ENCODE measurements at regions of chr19 and their contacts with region 1.

Region 1: DNA sequence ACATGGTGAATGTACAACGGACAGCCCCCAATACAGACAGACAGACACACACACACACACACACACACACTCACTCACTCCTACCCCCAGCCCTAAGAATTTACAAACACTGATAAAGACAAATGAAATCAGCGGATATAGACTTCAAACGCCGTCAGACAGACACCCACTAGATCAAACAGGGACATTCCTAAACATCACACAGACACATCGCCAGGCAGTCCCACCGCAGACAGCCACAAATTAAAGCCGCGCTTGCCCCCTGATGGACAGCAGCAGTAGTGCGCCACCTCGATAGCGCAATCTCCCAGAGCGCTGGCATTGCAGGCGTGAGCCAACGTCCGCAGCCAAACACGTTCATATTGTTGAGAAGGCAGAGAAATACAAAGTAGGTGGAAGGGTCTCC is 24.7 kb upstream of the ADGRE1 start:
- DNase-seq: peak; percentile 85
- H3K4me3 Mint-ChIP-seq: peak overlapping the region; percentile 5
- H3K27ac Mint-ChIP-seq: no peak overlapping the region
- H3K4me1 Mint-ChIP-seq: peaks cover 8% of the 10 kb centered on the region
- H3K27me3 Mint-ChIP-seq: peaks cover 11% of the 10 kb centered on the region
- CTCF ChIP-seq: peak; percentile 75

Region 2: DNA sequence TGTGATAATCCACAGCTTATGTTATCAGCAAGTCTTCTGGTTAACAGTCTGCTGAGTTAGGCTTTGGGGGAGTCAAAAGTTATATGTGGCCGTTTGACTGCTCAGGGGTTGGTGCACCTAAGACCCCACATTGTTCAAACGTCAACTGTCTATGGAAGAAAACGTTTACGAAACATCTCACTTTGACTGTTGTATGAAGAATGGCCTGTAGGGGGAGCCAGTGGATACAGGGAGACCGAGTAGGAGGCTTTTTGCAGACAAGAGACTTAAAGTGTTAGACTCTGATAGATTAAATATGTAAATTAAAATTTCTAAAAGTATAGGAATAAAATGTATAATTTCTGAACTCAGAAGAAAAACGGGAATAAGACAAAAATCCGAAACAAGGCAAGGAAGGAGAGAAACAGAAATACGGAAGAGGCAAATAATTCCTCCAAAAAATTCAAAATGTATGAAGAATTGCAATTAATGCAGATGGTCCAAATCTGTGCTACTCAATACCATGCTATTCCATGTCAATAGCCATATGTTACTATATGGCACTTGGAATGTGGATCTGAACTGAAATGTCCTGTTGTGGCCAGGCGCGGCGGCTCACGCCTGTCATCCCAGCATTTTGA is 230.6 kb before region 1 on chr19:
- CTCF ChIA-PET with region 1: interaction called, 3 read pairs
- intact Hi-C with region 1: loop called (anchors 2 kb)
- DNase-seq: peak; percentile 75
- H3K4me3 Mint-ChIP-seq: no peak overlapping the region
- H3K27ac Mint-ChIP-seq: no peak overlapping the region
- H3K4me1 Mint-ChIP-seq: peaks cover 10% of the 10 kb centered on the region
- H3K27me3 Mint-ChIP-seq: peaks cover 12% of the 10 kb centered on the region
- CTCF ChIP-seq: peak; percentile 17

Region 3: GRCh38 chr19:6737284-6738046 is 125.2 kb before region 1 on chr19 and contains the start of gene GPR108:
- CTCF ChIA-PET with region 1: interaction called, 46 read pairs
- intact Hi-C with region 1: loop called (anchors 1 kb)
- DNase-seq: peak; percentile 98
- H3K4me3 Mint-ChIP-seq: peak within 1 kb of the TSS; percentile 88
- H3K27ac Mint-ChIP-seq: peak within 1 kb of the TSS; percentile 97
- H3K4me1 Mint-ChIP-seq: peaks cover 21% of the 10 kb centered on the region
- H3K27me3 Mint-ChIP-seq: no peaks in the 10 kb centered on the region
- CTCF ChIP-seq: no peak
- total RNA-seq, gene GPR108: 67.7 and 69.0 TPM in 2 replicates

Region 4: GRCh38 chr19:6767357-6768235 is 95.1 kb before region 1 on chr19 and contains the start of gene SH2D3A:
- CTCF ChIA-PET with region 1: interaction called, 8 read pairs
- intact Hi-C with region 1: loop called (anchors 1 kb)
- DNase-seq: peak; percentile 95
- H3K4me3 Mint-ChIP-seq: peak within 1 kb of the TSS; percentile 78
- H3K27ac Mint-ChIP-seq: peak within 1 kb of the TSS; percentile 94
- H3K4me1 Mint-ChIP-seq: peaks cover 12% of the 10 kb centered on the region
- H3K27me3 Mint-ChIP-seq: no peaks in the 10 kb centered on the region
- CTCF ChIP-seq: no peak
- total RNA-seq, gene SH2D3A: 62.0 and 64.0 TPM in 2 replicates

Region 5: DNA sequence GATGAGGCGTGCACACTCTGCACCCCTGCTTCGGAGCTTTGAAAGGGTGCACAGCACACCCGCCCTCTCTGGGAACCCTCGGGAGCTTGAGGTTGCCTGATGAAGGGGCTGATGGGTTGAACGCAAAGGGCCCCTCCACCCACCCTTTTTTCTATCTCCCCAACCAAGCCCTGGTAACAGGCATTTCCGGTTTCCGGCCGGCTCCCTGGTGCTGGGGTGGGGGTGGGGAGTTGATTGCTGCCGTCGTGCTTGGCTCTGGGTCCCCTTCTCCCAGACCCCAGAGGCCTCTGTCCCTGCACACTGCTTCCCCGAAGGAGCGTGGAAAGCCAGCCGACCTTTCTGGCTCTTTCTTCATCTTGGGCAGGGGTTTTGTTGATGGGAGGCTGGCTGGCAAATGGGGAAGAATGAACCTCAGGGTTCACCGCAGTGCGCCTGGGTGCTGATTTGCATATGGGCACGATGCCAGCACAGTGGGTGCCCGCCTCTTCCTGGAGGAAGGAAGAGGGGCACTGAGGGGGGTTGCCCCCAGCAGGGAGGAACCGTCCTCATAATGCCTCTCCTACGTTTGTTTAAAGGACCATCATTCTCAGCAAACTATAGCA is 61.1 kb before region 1 on chr19:
- CTCF ChIA-PET with region 1: interaction called, 10 read pairs
- intact Hi-C with region 1: loop called (anchors 2 kb)
- DNase-seq: peak; percentile 85
- H3K4me3 Mint-ChIP-seq: peak overlapping the region; percentile 81
- H3K27ac Mint-ChIP-seq: peak overlapping the region; percentile 99
- H3K4me1 Mint-ChIP-seq: peaks cover 33% of the 10 kb centered on the region
- H3K27me3 Mint-ChIP-seq: no peaks in the 10 kb centered on the region
- CTCF ChIP-seq: no peak

Measured in Calu3 (cell line).